ENCODE measurements at regions of chr4 and their contacts with region 1.

Region 1: GRCh38 chr4:47562297-47562696 is 77.2 kb downstream of the ATP10D start:
- DNase-seq: no peak
- H3K4me3 Mint-ChIP-seq: no peak overlapping the region
- H3K27ac Mint-ChIP-seq: no peak overlapping the region
- H3K4me1 Mint-ChIP-seq: peaks cover 3% of the 10 kb centered on the region
- H3K27me3 Mint-ChIP-seq: no peaks in the 10 kb centered on the region

Region 2: GRCh38 chr4:47315346-47315745 is 247.0 kb before region 1 on chr4:
- CTCF ChIA-PET with region 1: no interaction called
- POLR2A ChIA-PET with region 1: no interaction called
- intact Hi-C with region 1: loop called (anchors 10 kb)
- DNase-seq: no peak
- H3K4me3 Mint-ChIP-seq: no peak overlapping the region
- H3K27ac Mint-ChIP-seq: no peak overlapping the region
- H3K4me1 Mint-ChIP-seq: no peaks in the 10 kb centered on the region
- H3K27me3 Mint-ChIP-seq: peaks cover 8% of the 10 kb centered on the region

Region 3: GRCh38 chr4:47463235-47463956 is 98.9 kb before region 1 on chr4 and contains the start of gene COMMD8:
- CTCF ChIA-PET with region 1: interaction called, 6 read pairs
- POLR2A ChIA-PET with region 1: no interaction called
- intact Hi-C with region 1: loop called (anchors 1 kb)
- DNase-seq: peak; percentile 98
- H3K4me3 Mint-ChIP-seq: peak within 1 kb of the TSS; percentile 85
- H3K27ac Mint-ChIP-seq: peak within 1 kb of the TSS; percentile 68
- H3K4me1 Mint-ChIP-seq: peaks cover 26% of the 10 kb centered on the region
- H3K27me3 Mint-ChIP-seq: no peaks in the 10 kb centered on the region
- total RNA-seq, gene COMMD8: 27.5 to 27.9 TPM

Region 4: DNA sequence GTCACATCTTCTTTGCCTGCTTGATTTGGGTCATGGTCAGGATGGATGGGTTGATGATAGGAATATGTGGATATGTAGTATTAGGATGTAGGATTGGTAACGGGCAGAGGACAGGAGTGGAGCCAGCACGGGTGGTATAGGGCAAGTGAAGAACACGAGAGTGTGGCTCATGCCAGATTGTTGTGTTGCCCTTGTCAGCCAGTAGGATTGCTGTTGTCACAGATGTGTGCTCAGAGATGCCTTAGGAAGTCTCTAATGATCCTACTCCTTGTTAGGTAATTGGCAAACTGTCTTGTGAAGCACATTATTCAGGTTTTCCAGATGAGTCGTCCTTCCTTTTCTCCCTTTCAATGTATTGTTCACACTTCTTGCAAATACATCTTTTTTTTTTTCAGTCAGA is 71.7 kb before region 1 on chr4:
- CTCF ChIA-PET with region 1: interaction called, 4 read pairs
- POLR2A ChIA-PET with region 1: no interaction called
- intact Hi-C with region 1: loop called (anchors 2 kb)
- DNase-seq: no peak
- H3K4me3 Mint-ChIP-seq: no peak overlapping the region
- H3K27ac Mint-ChIP-seq: no peak overlapping the region
- H3K4me1 Mint-ChIP-seq: peaks cover 17% of the 10 kb centered on the region
- H3K27me3 Mint-ChIP-seq: no peaks in the 10 kb centered on the region

Region 5: GRCh38 chr4:47704693-47705325 is 142.5 kb after region 1 on chr4:
- CTCF ChIA-PET with region 1: no interaction called
- POLR2A ChIA-PET with region 1: no interaction called
- intact Hi-C with region 1: no loop called
- DNase-seq: peak; percentile 37
- H3K4me3 Mint-ChIP-seq: no peak overlapping the region
- H3K27ac Mint-ChIP-seq: no peak overlapping the region
- H3K4me1 Mint-ChIP-seq: no peaks in the 10 kb centered on the region
- H3K27me3 Mint-ChIP-seq: peaks cover 20% of the 10 kb centered on the region

Measured in activated CD4-positive, alpha-beta memory T cell treated with anti-CD3 and anti-CD28 coated beads for 36 hours (primary cell).